ENCODE measurements at regions of chr18 and their contacts with region 1.

Region 1: GRCh38 chr18:75209129-75209950 is at the start of gene PTGR3:
- DNase-seq: peak; percentile 51 to 92 (median 70)
- ATAC-seq: peak; percentile 48
- H3K4me3 ChIP-seq: peak within 1 kb of the TSS; percentile 98
- H3K4me3 Mint-ChIP-seq: peak within 1 kb of the TSS; percentile 98
- H3K27ac ChIP-seq: peak within 1 kb of the TSS; percentile 78 to 81
- H3K27ac Mint-ChIP-seq: peak within 1 kb of the TSS; percentile 99
- H3K4me1 ChIP-seq: peaks cover 43% of the 10 kb centered on the region
- H3K4me1 Mint-ChIP-seq: peaks cover 66% of the 10 kb centered on the region
- H3K27me3 ChIP-seq: no peaks in the 10 kb centered on the region
- H3K27me3 Mint-ChIP-seq: no peaks in the 10 kb centered on the region
- CTCF ChIP-seq: no peak
- total RNA-seq, gene PTGR3: 14.1 to 14.3 TPM

Region 2: GRCh38 chr18:74291771-74292540 is 917.4 kb before region 1 on chr18 and contains the start of gene CYB5A:
- CTCF ChIA-PET with region 1: no interaction called
- POLR2A ChIA-PET with region 1: no interaction called
- intact Hi-C with region 1: loop called in 1 of 2 experiments (anchors 5 kb)
- DNase-seq: peak; percentile 97 to 99 (median 98)
- ATAC-seq: peak; percentile 96
- H3K4me3 ChIP-seq: peak within 1 kb of the TSS; percentile 99
- H3K4me3 Mint-ChIP-seq: no peak within 1 kb of the TSS
- H3K27ac ChIP-seq: peak within 1 kb of the TSS in 1 of 2 donors; percentile 61
- H3K27ac Mint-ChIP-seq: peak within 1 kb of the TSS; percentile 35
- H3K4me1 ChIP-seq: peaks cover 19% of the 10 kb centered on the region
- H3K4me1 Mint-ChIP-seq: peaks cover 12% of the 10 kb centered on the region
- H3K27me3 ChIP-seq: no peaks in the 10 kb centered on the region
- H3K27me3 Mint-ChIP-seq: no peaks in the 10 kb centered on the region
- CTCF ChIP-seq: peak; percentile 20
- total RNA-seq, gene CYB5A: 3.7 to 4.1 TPM

Region 3: DNA sequence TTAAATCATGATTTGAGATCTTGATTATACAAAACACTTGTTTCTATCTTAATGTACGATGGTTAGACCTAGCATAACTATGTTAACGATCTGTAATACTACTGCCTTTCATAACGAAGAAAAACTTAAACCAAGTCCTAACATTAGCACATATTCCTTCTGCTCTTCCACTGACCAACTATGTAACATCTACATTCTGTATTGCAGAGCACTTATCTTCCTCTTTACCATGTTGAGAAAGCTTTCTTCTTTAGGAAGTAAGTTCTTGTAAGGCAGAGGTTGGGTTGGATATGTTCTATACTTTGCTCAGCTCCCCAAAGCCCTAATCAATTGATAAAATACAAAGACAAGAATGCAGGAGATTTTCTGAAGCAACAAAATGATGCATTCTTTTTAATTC is 619.5 kb before region 1 on chr18:
- CTCF ChIA-PET with region 1: no interaction called
- POLR2A ChIA-PET with region 1: no interaction called
- intact Hi-C with region 1: loop called in 1 of 2 experiments (anchors 5 kb)
- DNase-seq: no peak
- ATAC-seq: no peak
- H3K4me3 ChIP-seq: no peak overlapping the region
- H3K4me3 Mint-ChIP-seq: no peak overlapping the region
- H3K27ac ChIP-seq: no peak overlapping the region
- H3K27ac Mint-ChIP-seq: no peak overlapping the region
- H3K4me1 ChIP-seq: no peaks in the 10 kb centered on the region
- H3K4me1 Mint-ChIP-seq: peaks cover 8% of the 10 kb centered on the region
- H3K27me3 ChIP-seq: no peaks in the 10 kb centered on the region
- H3K27me3 Mint-ChIP-seq: peaks cover 28% of the 10 kb centered on the region
- CTCF ChIP-seq: no peak

Region 4: GRCh38 chr18:74623047-74623816 is 586.1 kb before region 1 on chr18:
- CTCF ChIA-PET with region 1: no interaction called
- POLR2A ChIA-PET with region 1: interaction called, 6 read pairs
- intact Hi-C with region 1: loop called in 1 of 2 experiments (anchors 10 kb)
- DNase-seq: peak in 12 of 14 experiments; percentile 19 to 65 (median 38)
- ATAC-seq: peak; percentile 39
- H3K4me3 ChIP-seq: no peak overlapping the region
- H3K4me3 Mint-ChIP-seq: no peak overlapping the region
- H3K27ac ChIP-seq: no peak overlapping the region
- H3K27ac Mint-ChIP-seq: no peak overlapping the region
- H3K4me1 ChIP-seq: peaks cover 17% of the 10 kb centered on the region
- H3K4me1 Mint-ChIP-seq: peaks cover 20% of the 10 kb centered on the region
- H3K27me3 ChIP-seq: no peaks in the 10 kb centered on the region
- H3K27me3 Mint-ChIP-seq: no peaks in the 10 kb centered on the region
- CTCF ChIP-seq: peak; percentile 79

Region 5: DNA sequence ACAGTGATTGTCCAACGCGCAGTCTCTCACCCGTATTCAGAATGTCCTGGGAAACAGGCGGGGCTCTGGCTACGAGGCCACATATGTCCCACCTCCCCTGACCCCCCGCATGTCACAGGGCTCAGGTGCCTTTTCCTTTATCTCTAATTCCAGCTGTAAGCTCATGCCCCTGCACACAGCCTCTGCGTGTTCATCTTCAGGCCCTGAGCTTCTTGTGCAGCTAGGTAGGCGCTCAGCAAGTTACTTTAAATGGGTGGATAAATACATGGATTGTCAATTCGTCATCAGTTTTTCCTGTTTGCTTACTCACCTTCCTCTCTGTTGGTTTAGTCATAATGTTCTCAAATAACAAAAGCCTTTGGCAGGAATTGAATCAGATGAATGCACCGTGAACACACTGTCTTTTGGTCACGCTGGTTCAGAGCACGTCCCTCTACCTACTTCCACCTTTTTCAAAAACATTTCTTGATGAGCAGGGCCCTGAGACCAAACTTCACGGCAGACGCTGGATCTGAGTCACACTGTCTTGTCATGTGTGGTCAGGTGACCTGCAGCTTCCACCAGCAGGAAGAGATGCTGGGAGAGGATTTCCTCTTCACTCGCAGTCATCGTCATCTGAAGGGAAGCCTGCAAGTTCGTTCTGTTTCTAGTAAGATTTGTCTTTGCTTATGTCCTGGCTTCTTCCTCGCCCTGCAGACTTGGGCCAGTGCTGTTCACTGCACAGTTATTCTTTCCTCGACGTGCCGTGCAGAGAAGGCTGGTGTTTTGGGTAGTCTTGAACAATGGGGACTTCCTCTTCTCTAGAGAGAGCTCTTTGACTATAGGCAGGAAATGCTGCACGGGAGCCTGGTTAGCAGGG is 138.5 kb before region 1 on chr18:
- CTCF ChIA-PET with region 1: no interaction called
- POLR2A ChIA-PET with region 1: interaction called, 36 read pairs
- intact Hi-C with region 1: loop called (anchors 2 to 5 kb)
- DNase-seq: peak; percentile 47 to 88 (median 72)
- ATAC-seq: peak; percentile 87
- H3K4me3 ChIP-seq: peak overlapping the region; percentile 54
- H3K4me3 Mint-ChIP-seq: peak overlapping the region; percentile 88
- H3K27ac ChIP-seq: peak overlapping the region; percentile 71 to 91
- H3K27ac Mint-ChIP-seq: peak overlapping the region; percentile 95
- H3K4me1 ChIP-seq: peaks cover 53% of the 10 kb centered on the region
- H3K4me1 Mint-ChIP-seq: peaks cover 46% of the 10 kb centered on the region
- H3K27me3 ChIP-seq: no peaks in the 10 kb centered on the region
- H3K27me3 Mint-ChIP-seq: no peaks in the 10 kb centered on the region
- CTCF ChIP-seq: no peak

Region 6: GRCh38 chr18:75247611-75248421 is 38.5 kb after region 1 on chr18:
- CTCF ChIA-PET with region 1: interaction called, 3 read pairs
- POLR2A ChIA-PET with region 1: interaction called, 60 read pairs
- intact Hi-C with region 1: loop called (anchors 2 kb)
- DNase-seq: peak in 3 of 14 experiments; percentile 63 to 82 (median 64)
- ATAC-seq: peak; percentile 61
- H3K4me3 ChIP-seq: peak overlapping the region; percentile 51
- H3K4me3 Mint-ChIP-seq: peak overlapping the region; percentile 85
- H3K27ac ChIP-seq: peak overlapping the region; percentile 66 to 83
- H3K27ac Mint-ChIP-seq: peak overlapping the region; percentile 88
- H3K4me1 ChIP-seq: peaks cover 63% of the 10 kb centered on the region
- H3K4me1 Mint-ChIP-seq: peaks cover 73% of the 10 kb centered on the region
- H3K27me3 ChIP-seq: no peaks in the 10 kb centered on the region
- H3K27me3 Mint-ChIP-seq: no peaks in the 10 kb centered on the region
- CTCF ChIP-seq: no peak

Region 7: DNA sequence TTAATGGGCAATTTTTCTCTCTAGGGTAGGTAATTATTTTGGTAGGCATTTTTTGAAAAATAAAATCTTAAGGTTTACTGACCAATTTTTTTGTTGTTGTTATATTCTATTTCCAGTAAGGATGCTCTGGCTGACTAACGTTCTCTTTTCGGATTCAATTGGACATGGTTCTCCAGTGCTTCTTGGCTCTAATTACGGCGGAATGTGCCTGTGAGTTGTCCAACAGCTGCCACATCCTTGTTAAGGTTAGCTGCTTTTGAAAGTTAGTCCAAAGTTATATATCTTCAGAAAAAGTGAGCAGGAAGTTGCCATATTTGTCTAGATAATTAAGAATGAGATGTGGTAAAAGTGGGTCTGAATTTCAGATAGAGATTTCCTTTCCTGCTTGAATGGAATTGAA is 264.0 kb after region 1 on chr18:
- CTCF ChIA-PET with region 1: no interaction called
- POLR2A ChIA-PET with region 1: no interaction called
- intact Hi-C with region 1: no loop called
- DNase-seq: no peak
- ATAC-seq: no peak
- H3K4me3 ChIP-seq: no peak overlapping the region
- H3K4me3 Mint-ChIP-seq: no peak overlapping the region
- H3K27ac ChIP-seq: no peak overlapping the region
- H3K27ac Mint-ChIP-seq: no peak overlapping the region
- H3K4me1 ChIP-seq: no peaks in the 10 kb centered on the region
- H3K4me1 Mint-ChIP-seq: no peaks in the 10 kb centered on the region
- H3K27me3 ChIP-seq: no peaks in the 10 kb centered on the region
- H3K27me3 Mint-ChIP-seq: peaks cover 18% of the 10 kb centered on the region
- CTCF ChIP-seq: no peak

Region 8: DNA sequence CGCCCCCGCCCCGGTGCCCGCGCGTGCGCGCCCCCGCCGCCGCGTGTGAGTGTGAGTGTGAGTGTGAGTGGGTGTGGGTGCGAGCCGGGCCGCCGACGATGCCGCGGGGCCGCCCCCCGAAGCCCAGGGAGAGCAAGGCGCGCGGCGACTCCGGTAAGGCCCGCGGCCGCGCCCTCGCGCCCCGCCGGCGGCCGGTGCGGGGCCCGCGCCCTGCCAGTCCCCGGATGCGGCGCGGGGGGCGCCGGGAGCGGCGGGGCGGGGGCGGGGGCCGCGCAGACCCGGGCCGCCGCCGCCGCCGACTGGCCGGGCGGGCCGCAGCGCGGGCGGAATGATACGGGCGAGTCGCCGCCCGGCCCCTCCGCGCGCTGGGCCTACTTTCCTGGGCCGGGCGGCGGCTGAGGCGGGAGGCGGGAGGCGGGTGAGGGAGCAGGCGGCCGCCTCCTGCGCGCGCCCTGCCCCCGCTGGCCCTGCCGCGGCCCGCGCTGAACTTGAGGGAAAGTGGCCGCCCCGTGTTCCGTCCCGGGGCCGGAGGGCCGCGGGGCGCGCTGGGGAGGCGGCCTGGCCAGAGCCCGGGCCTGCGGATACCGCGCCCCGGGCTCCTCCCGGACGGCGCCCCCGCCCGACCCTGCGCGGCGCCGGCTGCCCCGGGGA is 1613.3 kb after region 1 on chr18 and contains the start of gene ZNF236:
- CTCF ChIA-PET with region 1: no interaction called
- POLR2A ChIA-PET with region 1: no interaction called
- intact Hi-C with region 1: loop called in 1 of 2 experiments (anchors 10 kb)
- DNase-seq: peak; percentile 39 to 88 (median 62)
- ATAC-seq: peak; percentile 43
- H3K4me3 ChIP-seq: peak within 1 kb of the TSS; percentile 97
- H3K4me3 Mint-ChIP-seq: peak within 1 kb of the TSS; percentile 96
- H3K27ac ChIP-seq: peak within 1 kb of the TSS; percentile 90 to 91
- H3K27ac Mint-ChIP-seq: peak within 1 kb of the TSS; percentile 96
- H3K4me1 ChIP-seq: peaks cover 47% of the 10 kb centered on the region
- H3K4me1 Mint-ChIP-seq: peaks cover 62% of the 10 kb centered on the region
- H3K27me3 ChIP-seq: no peaks in the 10 kb centered on the region
- H3K27me3 Mint-ChIP-seq: no peaks in the 10 kb centered on the region
- CTCF ChIP-seq: no peak
- total RNA-seq, gene ZNF236: 25.7 to 27.9 TPM